ENCODE measurements at regions of chr7 and their contacts with region 1.

Region 1: DNA sequence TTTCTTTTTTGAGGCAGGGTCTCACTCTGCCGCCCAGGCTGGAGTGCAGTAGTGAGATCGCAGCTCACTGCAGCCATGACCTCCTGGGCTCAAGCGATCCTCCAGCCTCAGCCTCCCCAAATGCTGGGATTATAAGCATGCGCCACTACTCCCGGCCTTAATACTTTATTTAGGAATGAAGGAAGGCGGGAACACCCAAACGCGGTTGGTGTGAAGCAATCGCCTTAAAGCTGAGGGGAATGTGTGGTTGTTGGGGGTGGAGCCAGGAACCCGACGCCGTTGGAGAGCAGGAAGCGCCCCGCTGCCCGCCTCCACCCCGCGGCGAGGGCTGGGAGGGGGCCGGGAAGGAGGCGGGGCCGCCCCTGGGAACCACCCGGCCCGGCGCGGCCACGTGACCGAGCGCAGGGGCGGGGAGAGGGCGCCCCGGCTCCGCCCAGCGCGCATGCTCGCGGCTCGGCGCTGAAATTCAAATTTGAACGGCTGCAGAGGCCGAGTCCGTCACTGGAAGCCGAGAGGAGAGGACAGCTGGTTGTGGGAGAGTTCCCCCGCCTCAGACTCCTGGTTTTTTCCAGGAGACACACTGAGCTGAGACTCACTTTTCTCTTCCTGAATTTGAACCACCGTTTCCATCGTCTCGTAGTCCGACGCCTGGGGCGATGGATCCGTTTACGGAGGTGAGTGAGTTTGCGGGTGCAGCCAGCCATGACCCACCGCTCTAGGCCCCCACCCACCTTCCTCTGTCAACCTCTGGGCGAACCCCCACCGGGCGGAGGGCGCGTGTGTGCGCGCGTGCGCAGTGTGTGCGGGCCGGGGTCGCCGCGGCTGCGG is at the start of gene ANLN:
- DNase-seq: peak; percentile 96 to 99
- H3K4me3 ChIP-seq: peak within 1 kb of the TSS; percentile 94
- H3K27ac ChIP-seq: peak within 1 kb of the TSS; percentile 81
- H3K4me1 ChIP-seq: peaks cover 70% of the 10 kb centered on the region
- H3K27me3 ChIP-seq: no peaks in the 10 kb centered on the region
- CTCF ChIP-seq: no peak; the same call in 1 of the 2 replicates
- total RNA-seq, gene ANLN: 239 and 262 TPM in 2 replicates

Region 2: GRCh38 chr7:35694781-35695472 is 694.7 kb before region 1 on chr7 and contains the start of gene HERPUD2:
- CTCF ChIA-PET with region 1: no interaction called
- POLR2A ChIA-PET with region 1: no interaction called
- intact Hi-C with region 1: loop called (anchors 2 kb)
- DNase-seq: peak; percentile 92 to 99
- H3K4me3 ChIP-seq: peak within 1 kb of the TSS; percentile 96
- H3K27ac ChIP-seq: peak within 1 kb of the TSS; percentile 77
- H3K4me1 ChIP-seq: peaks cover 61% of the 10 kb centered on the region
- H3K27me3 ChIP-seq: no peaks in the 10 kb centered on the region
- CTCF ChIP-seq: no peak
- total RNA-seq, gene HERPUD2: 33.8 and 53.4 TPM in 2 replicates

Region 3: DNA sequence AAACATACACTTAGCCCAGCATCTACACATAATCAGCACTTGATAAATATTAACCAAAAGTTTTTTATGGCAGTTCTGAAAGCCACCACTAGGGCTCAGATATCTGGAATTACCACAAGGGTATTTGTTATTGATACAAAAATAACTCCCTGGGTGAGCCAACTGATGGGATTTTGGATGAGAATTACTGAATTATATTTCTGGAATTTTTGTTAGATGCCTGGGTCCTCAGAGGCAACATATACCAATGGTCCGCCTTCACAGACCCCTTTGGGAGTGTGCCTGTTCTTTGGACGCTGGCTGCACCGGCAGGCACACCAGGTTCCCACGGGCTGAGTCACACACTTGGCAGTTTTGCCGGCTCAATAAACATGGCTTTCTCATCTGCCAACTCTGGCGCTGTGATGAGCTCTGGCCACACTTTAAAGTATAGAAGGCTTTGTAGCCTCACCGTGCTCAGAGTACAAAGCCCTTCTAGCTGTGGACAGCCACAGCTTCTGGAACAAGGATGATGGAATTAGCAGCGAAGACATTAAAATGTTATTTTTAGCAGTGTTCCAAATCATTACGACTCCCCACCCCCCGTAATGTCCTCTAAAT is 261.0 kb before region 1 on chr7:
- CTCF ChIA-PET with region 1: no interaction called
- POLR2A ChIA-PET with region 1: no interaction called
- intact Hi-C with region 1: loop called (anchors 2 kb)
- DNase-seq: peak; percentile 82 to 95
- H3K4me3 ChIP-seq: peak overlapping the region; percentile 40
- H3K27ac ChIP-seq: peak overlapping the region; percentile 86
- H3K4me1 ChIP-seq: peaks cover 33% of the 10 kb centered on the region
- H3K27me3 ChIP-seq: no peaks in the 10 kb centered on the region
- CTCF ChIP-seq: peak; percentile 100

Region 4: GRCh38 chr7:36366718-36367560 is 22.6 kb before region 1 on chr7:
- CTCF ChIA-PET with region 1: interaction called, 14 read pairs
- POLR2A ChIA-PET with region 1: interaction called, 9 read pairs
- intact Hi-C with region 1: loop called (anchors 1 kb)
- DNase-seq: peak; percentile 84 to 97
- H3K4me3 ChIP-seq: peak overlapping the region; percentile 86
- H3K27ac ChIP-seq: no peak overlapping the region; the same call in 1 of the 2 replicates
- H3K4me1 ChIP-seq: peaks cover 13% of the 10 kb centered on the region
- H3K27me3 ChIP-seq: no peaks in the 10 kb centered on the region
- CTCF ChIP-seq: peak; percentile 95

Region 5: GRCh38 chr7:36415144-36415543 is 25.6 kb after region 1 on chr7:
- CTCF ChIA-PET with region 1: interaction called, 11 read pairs
- POLR2A ChIA-PET with region 1: no interaction called
- intact Hi-C with region 1: no loop called
- DNase-seq: no peak
- H3K4me3 ChIP-seq: no peak overlapping the region
- H3K27ac ChIP-seq: no peak overlapping the region
- H3K4me1 ChIP-seq: no peaks in the 10 kb centered on the region
- H3K27me3 ChIP-seq: no peaks in the 10 kb centered on the region
- CTCF ChIP-seq: no peak